Activated B cell treated with CpG ODN at 0.5 μM for 24 hours (primary cell): ENCODE measurements at regions of chr7 and their contacts with region 1.

Region 1: GRCh38 chr7:37495574-37496184 is 47.0 kb upstream of the ELMO1 start:
- DNase-seq: no peak
- ATAC-seq: peak; percentile 58
- H3K4me3 Mint-ChIP-seq: no peak overlapping the region
- H3K27ac Mint-ChIP-seq: no peak overlapping the region
- H3K4me1 Mint-ChIP-seq: no peaks in the 10 kb centered on the region
- H3K27me3 Mint-ChIP-seq: no peaks in the 10 kb centered on the region
- CTCF ChIP-seq: peak; percentile 91

Region 2: DNA sequence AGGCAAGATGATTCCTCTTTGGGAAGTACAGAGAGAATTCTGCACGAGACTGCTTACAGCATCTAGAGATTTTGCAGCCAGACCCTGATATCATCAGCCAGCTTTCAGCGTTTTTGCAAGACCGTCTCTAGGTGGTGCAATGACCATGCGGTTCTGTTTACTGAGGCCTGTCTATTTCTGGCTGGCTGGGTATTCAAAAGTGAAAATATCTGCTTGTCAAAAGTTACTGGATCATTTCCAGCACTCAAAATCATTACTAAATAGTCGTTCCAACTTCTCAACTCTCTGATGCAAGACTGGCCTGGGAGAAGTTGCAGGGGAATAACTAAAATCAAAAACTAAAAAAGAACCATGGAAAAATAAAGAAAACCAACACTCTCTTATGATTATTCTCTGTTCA is 287.2 kb before region 1 on chr7:
- CTCF ChIA-PET with region 1: interaction called, 10 read pairs
- POLR2A ChIA-PET with region 1: no interaction called
- intact Hi-C with region 1: loop called (anchors 1 kb)
- DNase-seq: no peak
- ATAC-seq: peak; percentile 75
- H3K4me3 Mint-ChIP-seq: no peak overlapping the region
- H3K27ac Mint-ChIP-seq: peak overlapping the region; percentile 10
- H3K4me1 Mint-ChIP-seq: peaks cover 11% of the 10 kb centered on the region
- H3K27me3 Mint-ChIP-seq: no peaks in the 10 kb centered on the region
- CTCF ChIP-seq: no peak

Region 3: GRCh38 chr7:37480041-37481031 is 15.3 kb before region 1 on chr7:
- CTCF ChIA-PET with region 1: no interaction called
- POLR2A ChIA-PET with region 1: no interaction called
- intact Hi-C with region 1: no loop called
- DNase-seq: no peak
- ATAC-seq: no peak
- H3K4me3 Mint-ChIP-seq: no peak overlapping the region
- H3K27ac Mint-ChIP-seq: no peak overlapping the region
- H3K4me1 Mint-ChIP-seq: no peaks in the 10 kb centered on the region
- H3K27me3 Mint-ChIP-seq: peaks cover 10% of the 10 kb centered on the region
- CTCF ChIP-seq: no peak